Dorsolateral prefrontal cortex (tissue), 120 donors: ENCODE measurements at regions of chr5 and their contacts with region 1.

Region 1: GRCh38 chr5:98004463-98004862 is 769.0 kb upstream of the RGMB start:
- DNase-seq: no peak
- H3K4me3 ChIP-seq: no peak overlapping the region
- H3K27ac ChIP-seq: no peak overlapping the region
- H3K27me3 ChIP-seq: no peaks in the 10 kb centered on the region
- CTCF ChIP-seq: no peak

Region 2: GRCh38 chr5:97888439-97888838 is 116.0 kb before region 1 on chr5:
- intact Hi-C with region 1: no loop called
- DNase-seq: no peak
- H3K4me3 ChIP-seq: no peak overlapping the region
- H3K27ac ChIP-seq: no peak overlapping the region
- H3K27me3 ChIP-seq: no peaks in the 10 kb centered on the region
- CTCF ChIP-seq: no peak

Region 3: GRCh38 chr5:98205691-98206461 is 201.4 kb after region 1 on chr5:
- intact Hi-C with region 1: loop called in 1 of 2 experiments (anchors 10 kb)
- DNase-seq: no peak
- H3K4me3 ChIP-seq: no peak overlapping the region
- H3K27ac ChIP-seq: peak overlapping the region in 1 of 59 donors; percentile 70
- H3K27me3 ChIP-seq: no peaks in the 10 kb centered on the region
- CTCF ChIP-seq: no peak